ENCODE measurements at regions of chr6 and their contacts with region 1.

Region 1: DNA sequence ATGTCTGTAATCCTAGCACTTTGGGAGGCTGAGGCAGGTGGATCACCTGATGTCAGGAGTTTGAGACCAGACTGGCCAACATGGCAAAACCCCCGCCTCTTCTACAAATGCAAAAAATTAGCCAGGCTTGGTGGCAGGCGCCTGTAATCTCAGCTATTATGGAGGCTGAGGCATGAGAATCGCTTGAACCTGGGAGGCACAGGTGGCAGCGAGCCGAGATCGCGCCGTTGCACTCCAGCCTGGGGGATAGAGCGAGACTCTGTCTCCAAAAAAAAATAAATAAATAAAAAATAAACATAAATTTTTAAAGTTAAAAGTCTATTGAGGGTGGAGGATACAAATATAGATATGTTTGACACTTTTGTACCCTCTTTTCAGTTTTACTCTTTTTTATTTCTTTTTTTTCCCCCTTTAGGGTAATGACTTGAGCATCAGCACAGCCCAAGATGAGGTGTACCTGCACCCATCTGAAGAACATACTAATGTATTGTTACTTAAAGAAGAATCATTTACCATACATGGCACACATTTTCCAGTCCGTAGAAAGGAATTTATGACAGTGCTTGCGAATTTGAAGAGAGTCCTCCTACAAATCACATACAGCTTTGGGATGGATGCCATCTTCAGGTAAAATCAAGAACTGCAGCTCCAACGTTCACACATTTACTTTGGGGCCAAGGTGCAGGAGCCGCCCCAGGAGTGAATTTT is 368.9 kb downstream of the LAMA2 start:
- DNase-seq: peak in 12 of 14 experiments; percentile 3 to 71 (median 17)
- ATAC-seq: peak; percentile 68
- H3K4me3 ChIP-seq: no peak overlapping the region
- H3K4me3 Mint-ChIP-seq: no peak overlapping the region
- H3K27ac ChIP-seq: no peak overlapping the region
- H3K27ac Mint-ChIP-seq: no peak overlapping the region
- H3K4me1 ChIP-seq: no peaks in the 10 kb centered on the region
- H3K4me1 Mint-ChIP-seq: peaks cover 12% of the 10 kb centered on the region
- H3K27me3 ChIP-seq: peaks cover 0 to 18% of the 10 kb centered on the region in 2 experiments
- H3K27me3 Mint-ChIP-seq: peaks cover 42% of the 10 kb centered on the region
- CTCF ChIP-seq: peak; percentile 78

Region 2: DNA sequence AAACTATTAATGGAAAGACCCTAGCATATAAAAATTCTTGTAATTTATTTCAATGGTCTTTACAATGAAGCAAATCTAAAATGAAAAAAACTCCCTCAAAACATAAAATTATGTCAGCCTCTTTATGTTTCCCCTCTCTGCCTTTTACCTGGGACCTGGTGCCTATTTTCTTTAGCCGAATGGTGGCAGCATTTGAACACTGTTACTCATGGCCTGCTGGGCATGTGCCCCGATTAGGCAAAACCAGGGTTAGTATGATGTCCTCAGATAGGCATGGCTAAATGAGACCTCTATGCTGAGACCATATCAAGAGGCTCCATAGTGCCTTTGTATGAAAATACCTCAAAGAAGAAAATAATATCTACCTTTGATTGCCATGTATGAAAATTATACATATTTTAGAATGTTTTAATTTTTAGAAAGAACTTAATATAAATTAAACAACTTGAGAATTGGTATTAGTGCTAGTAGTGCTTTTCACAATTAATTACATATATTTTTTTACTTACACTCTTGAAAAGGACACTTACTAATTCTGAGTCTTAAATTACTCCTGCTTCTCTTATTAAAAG is 1697.3 kb before region 1 on chr6:
- CTCF ChIA-PET with region 1: no interaction called
- POLR2A ChIA-PET with region 1: no interaction called
- intact Hi-C with region 1: loop called in 1 of 2 experiments (anchors 10 kb)
- DNase-seq: peak in 5 of 14 experiments; percentile 1 to 35 (median 22)
- ATAC-seq: no peak
- H3K4me3 ChIP-seq: no peak overlapping the region
- H3K4me3 Mint-ChIP-seq: no peak overlapping the region
- H3K27ac ChIP-seq: no peak overlapping the region
- H3K27ac Mint-ChIP-seq: no peak overlapping the region
- H3K4me1 ChIP-seq: no peaks in the 10 kb centered on the region
- H3K4me1 Mint-ChIP-seq: no peaks in the 10 kb centered on the region
- H3K27me3 ChIP-seq: peaks cover 0 to 11% of the 10 kb centered on the region in 2 experiments
- H3K27me3 Mint-ChIP-seq: peaks cover 38% of the 10 kb centered on the region
- CTCF ChIP-seq: no peak

Region 3: GRCh38 chr6:129936329-129937165 is 684.7 kb after region 1 on chr6:
- CTCF ChIA-PET with region 1: no interaction called
- POLR2A ChIA-PET with region 1: no interaction called
- intact Hi-C with region 1: no loop called
- DNase-seq: peak in 12 of 14 experiments; percentile 4 to 72 (median 25)
- ATAC-seq: no peak
- H3K4me3 ChIP-seq: no peak overlapping the region
- H3K4me3 Mint-ChIP-seq: no peak overlapping the region
- H3K27ac ChIP-seq: no peak overlapping the region
- H3K27ac Mint-ChIP-seq: no peak overlapping the region
- H3K4me1 ChIP-seq: no peaks in the 10 kb centered on the region
- H3K4me1 Mint-ChIP-seq: peaks cover 4% of the 10 kb centered on the region
- H3K27me3 ChIP-seq: peaks cover 0 to under 1% of the 10 kb centered on the region in 2 experiments
- H3K27me3 Mint-ChIP-seq: peaks cover 24% of the 10 kb centered on the region
- CTCF ChIP-seq: peak; percentile 88

Measured in CD4-positive, alpha-beta T cell (primary cell).